ENCODE measurements at regions of chr1 and their contacts with region 1.

Region 1: GRCh38 chr1:68157416-68157815 is 74.9 kb downstream of the WLS start:
- DNase-seq: no peak
- H3K4me3 ChIP-seq: no peak overlapping the region
- H3K27ac ChIP-seq: no peak overlapping the region
- H3K4me1 ChIP-seq: no peaks in the 10 kb centered on the region
- H3K27me3 ChIP-seq: no peaks in the 10 kb centered on the region
- CTCF ChIP-seq: no peak

Region 2: GRCh38 chr1:68168545-68169171 is 11.2 kb after region 1 on chr1:
- CTCF ChIA-PET with region 1: no interaction called
- POLR2A ChIA-PET with region 1: no interaction called
- intact Hi-C with region 1: no loop called
- DNase-seq: no peak
- H3K4me3 ChIP-seq: no peak overlapping the region
- H3K27ac ChIP-seq: no peak overlapping the region
- H3K4me1 ChIP-seq: peaks cover 10% of the 10 kb centered on the region
- H3K27me3 ChIP-seq: no peaks in the 10 kb centered on the region
- CTCF ChIP-seq: no peak

Region 3: GRCh38 chr1:68188060-68188538 is 30.7 kb after region 1 on chr1:
- CTCF ChIA-PET with region 1: no interaction called
- POLR2A ChIA-PET with region 1: no interaction called
- intact Hi-C with region 1: no loop called
- DNase-seq: no peak
- H3K4me3 ChIP-seq: no peak overlapping the region
- H3K27ac ChIP-seq: no peak overlapping the region
- H3K4me1 ChIP-seq: peaks cover 10% of the 10 kb centered on the region; the same call in 1 of the 2 replicates
- H3K27me3 ChIP-seq: no peaks in the 10 kb centered on the region
- CTCF ChIP-seq: no peak

Region 4: DNA sequence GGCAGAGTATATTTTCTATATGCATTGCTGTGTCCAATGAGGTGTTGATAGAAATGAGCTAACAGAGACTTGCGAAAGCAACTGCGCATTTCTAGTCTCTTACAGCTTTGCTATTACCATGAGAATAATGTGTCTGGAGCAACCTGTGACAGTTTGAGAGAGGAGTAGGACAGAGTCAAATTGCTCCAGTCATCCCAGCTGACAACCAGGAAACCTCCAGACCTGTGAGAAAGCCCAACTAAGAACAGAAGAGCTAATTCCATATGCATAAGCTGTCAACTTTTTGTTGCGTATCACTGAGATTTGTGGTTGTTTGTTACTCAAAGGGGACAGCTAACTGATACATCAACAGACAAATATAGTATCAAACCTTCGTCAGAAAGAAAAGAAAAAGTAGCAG is 1056.2 kb after region 1 on chr1:
- CTCF ChIA-PET with region 1: interaction called, 13 read pairs
- POLR2A ChIA-PET with region 1: no interaction called
- intact Hi-C with region 1: no loop called
- DNase-seq: no peak
- H3K4me3 ChIP-seq: no peak overlapping the region
- H3K27ac ChIP-seq: no peak overlapping the region
- H3K4me1 ChIP-seq: no peaks in the 10 kb centered on the region
- H3K27me3 ChIP-seq: no peaks in the 10 kb centered on the region
- CTCF ChIP-seq: no peak

Measured in PC-9 (cell line).